ENCODE measurements at regions of chr7 and their contacts with region 1.

Region 1: DNA sequence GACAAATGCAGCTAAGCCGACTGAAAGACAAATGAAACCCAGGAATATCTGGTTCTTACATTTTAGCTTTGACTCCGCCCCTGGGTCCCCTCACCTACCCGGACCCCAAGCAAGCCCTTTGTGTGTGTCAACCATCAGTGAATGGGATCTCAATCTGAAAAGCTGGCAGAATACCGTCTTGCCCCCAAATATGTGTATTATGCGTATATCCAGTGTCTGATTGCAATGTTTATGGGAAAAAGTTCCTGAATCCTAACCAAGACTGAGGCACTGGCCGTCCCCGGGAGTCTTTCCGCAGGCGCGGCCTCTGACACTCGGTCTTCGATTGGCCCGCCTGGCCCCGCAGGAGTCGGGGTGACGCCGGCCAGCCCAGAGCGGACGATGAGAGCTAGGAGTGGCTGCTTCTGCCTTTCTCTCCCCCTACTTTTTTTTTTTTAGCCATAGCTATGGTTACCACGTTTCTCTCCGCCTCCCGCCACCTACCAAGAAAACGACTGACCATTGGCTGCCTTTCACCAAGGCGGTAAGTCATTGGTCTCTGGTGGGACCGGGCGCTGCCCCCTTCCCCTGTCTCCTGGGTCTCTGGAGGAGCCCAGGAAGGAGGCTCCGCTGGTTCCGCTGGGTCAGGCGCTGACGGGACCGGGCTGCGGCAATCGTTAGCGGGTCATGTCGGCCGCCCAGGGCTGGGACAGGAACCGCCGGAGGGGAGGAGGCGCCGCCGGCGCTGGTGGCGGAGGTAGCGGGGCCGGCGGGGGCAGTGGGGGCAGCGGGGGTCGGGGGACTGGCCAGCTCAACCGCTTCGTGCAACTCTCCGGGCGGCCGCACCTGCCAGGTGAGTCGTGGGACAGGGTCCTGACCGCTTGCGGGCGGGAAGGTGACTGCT is at the start of gene KLHDC10:
- DNase-seq: peak; percentile 93 to 99
- H3K4me3 ChIP-seq: peak within 1 kb of the TSS; percentile 93 to 99
- H3K27ac ChIP-seq: peak within 1 kb of the TSS; percentile 75 to 85
- H3K4me1 ChIP-seq: peaks cover 0 to 19% of the 10 kb centered on the region in 2 donors
- H3K27me3 ChIP-seq: no peaks in the 10 kb centered on the region
- CTCF ChIP-seq: no peak
- total RNA-seq, gene KLHDC10: 13.0 TPM

Region 2: GRCh38 chr7:129952653-129953560 is 117.3 kb before region 1 on chr7 and contains the start of gene UBE2H:
- intact Hi-C with region 1: loop called (anchors 5 kb)
- DNase-seq: peak; percentile 72 to 96
- H3K4me3 ChIP-seq: peak within 1 kb of the TSS; percentile 80 to 92
- H3K27ac ChIP-seq: peak within 1 kb of the TSS; percentile 91
- H3K4me1 ChIP-seq: peaks cover 6 to 13% of the 10 kb centered on the region in 2 donors
- H3K27me3 ChIP-seq: no peaks in the 10 kb centered on the region
- CTCF ChIP-seq: no peak
- total RNA-seq, gene UBE2H: 83.9 TPM

Region 3: GRCh38 chr7:130205084-130205947 is 135.1 kb after region 1 on chr7 and contains the start of gene TMEM209:
- intact Hi-C with region 1: loop called (anchors 2 kb)
- DNase-seq: peak; percentile 83 to 97
- H3K4me3 ChIP-seq: peak within 1 kb of the TSS; percentile 69 to 83
- H3K27ac ChIP-seq: peak within 1 kb of the TSS; percentile 77 to 95
- H3K4me1 ChIP-seq: peaks cover 0 to 5% of the 10 kb centered on the region in 2 donors
- H3K27me3 ChIP-seq: no peaks in the 10 kb centered on the region
- CTCF ChIP-seq: no peak
- total RNA-seq, gene TMEM209: 5.3 TPM

Region 4: DNA sequence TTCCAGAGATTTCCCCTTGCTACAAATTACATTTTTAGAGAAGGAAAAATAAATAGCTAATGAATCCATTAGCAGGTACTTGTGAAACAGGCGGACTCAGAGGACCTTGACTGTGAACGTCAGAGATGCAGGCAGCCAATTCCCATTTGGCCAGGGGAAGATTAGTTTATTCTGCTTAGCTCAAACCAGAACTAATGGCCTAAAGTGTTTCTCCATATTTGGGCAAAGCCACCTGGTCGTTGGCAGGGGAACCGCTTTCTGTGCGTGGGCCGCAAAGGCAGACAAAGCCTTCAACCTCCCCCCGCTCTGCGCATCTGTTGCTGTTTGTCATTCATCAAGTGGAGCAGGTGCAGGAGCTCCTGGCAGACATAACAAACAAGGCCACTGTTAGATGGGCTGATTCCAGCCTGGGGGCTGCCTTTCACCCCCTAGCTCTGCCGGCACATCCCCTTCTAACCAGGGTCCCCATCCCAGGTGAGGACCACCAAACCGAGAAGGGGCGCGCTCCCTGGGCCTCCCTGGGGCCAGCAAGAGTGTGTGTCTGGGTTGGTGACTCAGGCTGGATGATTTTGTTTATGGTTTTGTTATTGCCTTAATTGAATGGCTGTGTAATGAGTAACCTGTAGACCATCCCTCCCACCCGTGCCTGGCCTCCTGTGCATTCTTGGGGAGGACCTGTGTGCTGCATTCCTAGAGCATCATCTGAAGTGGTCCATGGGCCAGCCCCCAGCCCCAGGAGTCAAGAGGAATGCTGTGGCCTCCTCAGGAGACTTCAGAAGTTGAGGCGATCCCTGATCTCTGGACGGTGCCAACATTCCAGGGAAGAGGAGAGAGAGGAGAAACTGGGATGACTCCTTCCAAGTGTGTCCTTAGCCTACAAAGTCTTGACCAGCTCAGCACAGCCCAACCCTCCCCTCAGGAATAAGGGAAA is 295.6 kb after region 1 on chr7:
- intact Hi-C with region 1: no loop called
- DNase-seq: no peak
- H3K4me3 ChIP-seq: no peak overlapping the region
- H3K27ac ChIP-seq: no peak overlapping the region
- H3K4me1 ChIP-seq: peaks cover 5 to 27% of the 10 kb centered on the region in 2 donors
- H3K27me3 ChIP-seq: no peaks in the 10 kb centered on the region
- CTCF ChIP-seq: no peak

Region 5: DNA sequence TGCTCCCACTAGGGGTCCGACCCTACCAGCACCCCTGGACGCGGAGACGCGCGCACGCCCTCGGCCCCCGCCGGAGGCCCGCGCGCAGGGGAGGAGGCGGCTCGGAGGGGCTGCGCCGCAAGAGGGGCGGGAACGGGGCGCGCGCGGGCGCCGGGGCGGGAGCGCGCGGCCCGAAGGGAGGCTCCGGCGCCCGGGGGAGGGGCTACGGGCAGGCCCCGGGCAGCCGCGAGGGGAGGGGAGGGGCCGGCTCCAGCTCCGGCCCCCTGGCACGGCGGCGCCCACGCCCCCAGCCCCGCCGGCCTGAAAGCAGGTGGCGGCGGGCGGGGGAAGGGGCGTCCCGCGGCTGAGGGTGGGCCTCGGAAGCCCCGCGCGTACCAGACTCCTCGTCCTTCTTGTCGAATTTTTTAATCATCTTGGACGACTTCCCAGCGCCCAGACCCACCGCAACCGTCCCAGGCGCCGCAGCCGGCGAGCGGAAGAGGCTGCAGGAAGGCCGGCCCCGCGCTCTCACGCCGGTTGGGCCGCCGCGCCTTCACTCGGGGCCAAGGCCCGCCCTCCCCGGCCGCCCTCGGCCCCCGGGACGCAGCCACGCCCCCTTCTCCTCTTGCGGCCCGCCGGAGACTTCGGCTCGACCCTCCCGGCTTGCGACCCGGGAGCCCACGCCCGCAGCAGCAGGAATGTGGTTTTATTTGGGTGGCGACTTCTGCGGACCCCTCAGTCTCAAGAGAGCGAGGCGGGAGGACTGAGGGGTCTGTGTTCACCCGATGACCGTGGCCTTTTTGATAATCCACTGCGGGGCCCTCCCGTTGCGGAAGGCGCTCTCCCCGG is 598.3 kb after region 1 on chr7 and contains the start of gene COPG2:
- intact Hi-C with region 1: loop called (anchors 5 kb)
- DNase-seq: peak; percentile 22 to 88
- H3K4me3 ChIP-seq: peak within 1 kb of the TSS; percentile 83 to 89
- H3K27ac ChIP-seq: peak within 1 kb of the TSS; percentile 68 to 70
- H3K4me1 ChIP-seq: peaks cover 0 to 3% of the 10 kb centered on the region in 2 donors
- H3K27me3 ChIP-seq: no peaks in the 10 kb centered on the region
- CTCF ChIP-seq: no peak
- total RNA-seq, gene COPG2: 5.4 TPM

Region 6: GRCh38 chr7:130831817-130832481 is 761.7 kb after region 1 on chr7:
- intact Hi-C with region 1: loop called (anchors 2 kb)
- DNase-seq: no peak
- H3K4me3 ChIP-seq: no peak overlapping the region
- H3K27ac ChIP-seq: no peak overlapping the region
- H3K4me1 ChIP-seq: peaks cover 0 to 3% of the 10 kb centered on the region in 2 donors
- H3K27me3 ChIP-seq: no peaks in the 10 kb centered on the region
- CTCF ChIP-seq: peak; percentile 41 to 78 (median 71)

Measured in ascending aorta (tissue), 2 donors.